ENCODE measurements at regions of chr10 and their contacts with region 1.

Region 1: GRCh38 chr10:70880077-70880534 is 8.3 kb downstream of the PCBD1 start:
- DNase-seq: peak; percentile 64 to 81 (median 76)
- H3K4me3 ChIP-seq: no peak overlapping the region
- H3K4me3 Mint-ChIP-seq: no peak overlapping the region
- H3K27ac ChIP-seq: no peak overlapping the region
- H3K27ac Mint-ChIP-seq: no peak overlapping the region
- H3K4me1 ChIP-seq: no peaks in the 10 kb centered on the region
- H3K4me1 Mint-ChIP-seq: no peaks in the 10 kb centered on the region
- H3K27me3 ChIP-seq: no peaks in the 10 kb centered on the region
- H3K27me3 Mint-ChIP-seq: peaks cover 0 to 6% (median 0%) of the 10 kb centered on the region in 3 donors
- CTCF ChIP-seq: peak; percentile 83

Region 2: DNA sequence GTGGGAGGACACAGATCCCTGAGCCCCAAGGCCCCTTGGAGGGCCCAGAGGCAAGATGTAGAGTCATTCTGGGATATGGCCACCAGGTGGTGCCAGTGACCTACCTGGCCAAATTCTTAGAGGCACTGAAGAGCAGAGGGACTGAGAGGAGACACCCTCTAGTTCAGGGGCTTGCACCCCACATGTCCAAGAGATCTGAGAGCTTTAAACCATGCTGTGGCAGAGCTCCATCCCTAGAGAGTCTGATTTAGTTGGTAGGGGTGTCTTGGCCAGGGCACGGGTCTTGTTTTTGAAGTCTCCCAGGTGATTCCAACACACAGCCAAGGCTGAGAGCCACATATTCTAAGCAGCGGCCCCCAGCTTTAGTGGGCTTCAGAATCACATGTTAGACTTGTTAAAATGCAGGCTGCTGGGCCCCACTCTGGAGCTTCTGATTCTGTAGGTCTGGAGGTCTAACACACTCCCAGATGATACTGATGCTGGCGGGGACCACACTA is 330.1 kb before region 1 on chr10:
- intact Hi-C with region 1: loop called (anchors 1 to 5 kb)
- DNase-seq: peak; percentile 48 to 65 (median 58)
- H3K4me3 ChIP-seq: no peak overlapping the region
- H3K4me3 Mint-ChIP-seq: no peak overlapping the region
- H3K27ac ChIP-seq: no peak overlapping the region
- H3K27ac Mint-ChIP-seq: no peak overlapping the region
- H3K4me1 ChIP-seq: no peaks in the 10 kb centered on the region
- H3K4me1 Mint-ChIP-seq: no peaks in the 10 kb centered on the region
- H3K27me3 ChIP-seq: no peaks in the 10 kb centered on the region
- H3K27me3 Mint-ChIP-seq: peaks cover 0 to 2% (median 1%) of the 10 kb centered on the region in 3 donors
- CTCF ChIP-seq: peak; percentile 93

Region 3: GRCh38 chr10:70815504-70816219 is 64.4 kb before region 1 on chr10 and contains the start of gene SGPL1:
- intact Hi-C with region 1: loop called (anchors 1 kb)
- DNase-seq: peak; percentile 69 to 80 (median 76)
- H3K4me3 ChIP-seq: peak within 1 kb of the TSS; percentile 80 to 97 (median 86)
- H3K4me3 Mint-ChIP-seq: peak within 1 kb of the TSS; percentile 98 to 99
- H3K27ac ChIP-seq: peak within 1 kb of the TSS; percentile 6 to 86
- H3K27ac Mint-ChIP-seq: peak within 1 kb of the TSS; percentile 55 to 95 (median 89)
- H3K4me1 ChIP-seq: peaks cover 8 to 13% of the 10 kb centered on the region in 2 donors
- H3K4me1 Mint-ChIP-seq: peaks cover 17% of the 10 kb centered on the region
- H3K27me3 ChIP-seq: no peaks in the 10 kb centered on the region
- H3K27me3 Mint-ChIP-seq: peaks cover 0 to under 1% (median 0%) of the 10 kb centered on the region in 3 donors
- CTCF ChIP-seq: peak; percentile 99
- polyA plus RNA-seq, gene SGPL1: 16.6 to 26.8 (median 26.1) TPM

Region 4: GRCh38 chr10:70940834-70941568 is 60.9 kb after region 1 on chr10:
- intact Hi-C with region 1: no loop called
- DNase-seq: no peak
- H3K4me3 ChIP-seq: no peak overlapping the region
- H3K4me3 Mint-ChIP-seq: no peak overlapping the region
- H3K27ac ChIP-seq: no peak overlapping the region
- H3K27ac Mint-ChIP-seq: no peak overlapping the region
- H3K4me1 ChIP-seq: no peaks in the 10 kb centered on the region
- H3K4me1 Mint-ChIP-seq: no peaks in the 10 kb centered on the region
- H3K27me3 ChIP-seq: no peaks in the 10 kb centered on the region
- H3K27me3 Mint-ChIP-seq: peaks cover 3 to 6% (median 5%) of the 10 kb centered on the region in 3 donors
- CTCF ChIP-seq: no peak